ENCODE measurements at regions of chr17 and their contacts with region 1.

Region 1: DNA sequence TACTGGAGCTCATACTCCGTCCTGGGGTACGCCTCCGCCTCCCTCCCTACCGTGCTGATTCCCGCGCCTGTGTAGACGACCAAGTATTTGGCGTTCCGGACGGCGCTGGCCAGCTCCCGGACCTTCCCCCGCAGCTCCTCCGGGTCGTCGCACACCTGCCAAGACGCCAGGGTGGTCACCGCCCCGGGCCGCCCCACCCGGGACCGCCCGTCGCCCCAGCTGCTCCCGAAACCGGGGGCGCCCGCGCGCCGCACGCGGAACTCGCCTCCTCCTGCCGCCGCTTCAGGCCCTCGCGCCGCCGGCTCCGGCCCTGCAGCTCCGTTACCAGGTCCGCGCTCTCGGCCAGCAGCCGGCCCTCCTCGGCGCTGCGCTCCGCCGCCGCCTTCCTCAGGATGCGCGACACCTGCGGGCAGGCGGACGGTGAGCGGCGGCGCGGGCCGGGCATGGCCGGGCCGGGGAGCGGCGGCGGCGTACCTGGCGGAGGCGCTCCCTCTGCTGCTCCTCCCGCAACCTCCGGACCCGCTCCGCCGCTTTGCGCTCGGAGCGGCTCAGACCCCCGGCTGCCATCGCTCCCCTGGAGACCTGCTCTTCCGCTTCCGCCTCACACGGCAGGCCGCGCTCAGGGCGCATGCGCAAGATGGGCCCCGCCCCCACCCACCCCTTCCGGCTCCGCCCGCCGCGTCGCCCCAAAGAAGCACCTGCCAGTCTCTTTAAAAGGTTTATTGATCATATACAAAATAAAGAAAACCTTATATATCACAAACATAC is at the start of gene SIRT7:
- DNase-seq: peak; percentile 67 to 95 (median 83)
- ATAC-seq: peak; percentile 90
- H3K4me3 ChIP-seq: peak within 1 kb of the TSS; percentile 71
- H3K4me3 Mint-ChIP-seq: peak within 1 kb of the TSS; percentile 97
- H3K27ac ChIP-seq: peak within 1 kb of the TSS in 1 of 2 donors; percentile 23
- H3K27ac Mint-ChIP-seq: peak within 1 kb of the TSS; percentile 85
- H3K4me1 ChIP-seq: peaks cover 40% of the 10 kb centered on the region
- H3K4me1 Mint-ChIP-seq: peaks cover 26% of the 10 kb centered on the region
- H3K27me3 ChIP-seq: no peaks in the 10 kb centered on the region
- H3K27me3 Mint-ChIP-seq: no peaks in the 10 kb centered on the region
- CTCF ChIP-seq: no peak
- total RNA-seq, gene SIRT7: 56.7 to 57.5 TPM

Region 2: DNA sequence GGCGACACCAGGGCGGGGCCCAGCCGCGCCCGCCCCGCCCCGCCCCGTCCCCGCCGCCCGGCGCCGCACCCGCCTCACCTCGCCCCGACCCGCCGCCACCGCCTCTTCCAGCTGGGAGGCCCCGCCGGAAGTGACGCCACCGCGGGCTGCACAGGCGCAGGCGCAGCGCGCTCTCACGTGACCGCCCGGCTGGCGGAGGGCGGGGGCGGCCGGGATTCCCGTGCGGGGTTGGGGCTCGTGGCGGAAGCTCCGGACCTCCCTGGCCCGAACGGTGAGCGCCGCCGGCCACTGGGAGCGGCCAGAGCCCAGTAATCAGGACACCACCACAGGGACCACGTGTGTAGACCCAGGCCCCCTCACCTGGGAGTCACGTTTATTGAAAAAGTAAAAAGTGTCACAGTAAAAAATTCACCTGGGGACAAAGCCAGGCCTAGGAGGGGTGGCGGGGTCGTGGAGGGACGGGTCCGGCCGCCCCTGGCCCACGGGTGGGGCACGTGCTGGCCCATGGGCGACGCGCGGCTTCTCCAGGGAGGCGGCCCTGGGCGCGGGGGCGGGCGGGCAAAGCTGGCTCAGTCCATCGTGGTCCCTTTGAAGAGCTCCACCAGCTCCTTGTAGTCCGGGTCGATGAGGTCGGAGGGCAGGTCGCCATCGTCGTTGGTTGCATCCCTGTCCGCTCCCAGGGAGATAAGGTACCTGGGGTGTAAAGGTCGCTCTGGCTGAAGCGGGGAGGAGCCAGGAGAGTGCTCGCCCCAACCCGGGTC is 84.4 kb before region 1 on chr17 and contains the start of gene MCRIP1:
- CTCF ChIA-PET with region 1: no interaction called
- POLR2A ChIA-PET with region 1: no interaction called
- intact Hi-C with region 1: loop called in 1 of 2 experiments (anchors 5 kb)
- DNase-seq: peak; percentile 82 to 98 (median 92)
- ATAC-seq: peak; percentile 78
- H3K4me3 ChIP-seq: peak within 1 kb of the TSS; percentile 80
- H3K4me3 Mint-ChIP-seq: peak within 1 kb of the TSS; percentile 93
- H3K27ac ChIP-seq: peak within 1 kb of the TSS; percentile 72 to 91
- H3K27ac Mint-ChIP-seq: peak within 1 kb of the TSS; percentile 88
- H3K4me1 ChIP-seq: peaks cover 28% of the 10 kb centered on the region
- H3K4me1 Mint-ChIP-seq: peaks cover 19% of the 10 kb centered on the region
- H3K27me3 ChIP-seq: no peaks in the 10 kb centered on the region
- H3K27me3 Mint-ChIP-seq: no peaks in the 10 kb centered on the region
- CTCF ChIP-seq: no peak
- total RNA-seq, gene MCRIP1: 36.9 to 37.7 TPM

Region 3: GRCh38 chr17:81927653-81928543 is 10.1 kb after region 1 on chr17 and contains the start of gene MAFG:
- CTCF ChIA-PET with region 1: no interaction called
- POLR2A ChIA-PET with region 1: interaction called, 26 read pairs
- intact Hi-C with region 1: no loop called
- DNase-seq: peak; percentile 78 to 97 (median 87)
- ATAC-seq: peak; percentile 58
- H3K4me3 ChIP-seq: peak within 1 kb of the TSS; percentile 61
- H3K4me3 Mint-ChIP-seq: peak within 1 kb of the TSS; percentile 88
- H3K27ac ChIP-seq: peak within 1 kb of the TSS; percentile 54 to 65
- H3K27ac Mint-ChIP-seq: peak within 1 kb of the TSS; percentile 88
- H3K4me1 ChIP-seq: peaks cover 51% of the 10 kb centered on the region
- H3K4me1 Mint-ChIP-seq: peaks cover 20% of the 10 kb centered on the region
- H3K27me3 ChIP-seq: peaks cover 19% of the 10 kb centered on the region in 2 experiments
- H3K27me3 Mint-ChIP-seq: peaks cover 16% of the 10 kb centered on the region
- CTCF ChIP-seq: no peak
- total RNA-seq, gene MAFG: 10.8 to 13.3 TPM